ENCODE measurements at regions of chr16 and their contacts with region 1.

Region 1: GRCh38 chr16:57462209-57462977 is at the start of gene POLR2C:
- DNase-seq: peak; percentile 95
- total RNA-seq, gene POLR2C: 46.9 TPM

Region 2: GRCh38 chr16:57535680-57536305 is 73.4 kb after region 1 on chr16:
- intact Hi-C with region 1: loop called (anchors 5 kb)
- DNase-seq: peak; percentile 96

Measured in cardiac septum (tissue), 1 donor.